HEK293T (cell line): ENCODE measurements at regions of chr15 and their contacts with region 1.

Region 1: GRCh38 chr15:75801859-75802593 is 41.2 kb upstream of the UBE2Q2 start:
- DNase-seq: peak; percentile 95

Region 2: DNA sequence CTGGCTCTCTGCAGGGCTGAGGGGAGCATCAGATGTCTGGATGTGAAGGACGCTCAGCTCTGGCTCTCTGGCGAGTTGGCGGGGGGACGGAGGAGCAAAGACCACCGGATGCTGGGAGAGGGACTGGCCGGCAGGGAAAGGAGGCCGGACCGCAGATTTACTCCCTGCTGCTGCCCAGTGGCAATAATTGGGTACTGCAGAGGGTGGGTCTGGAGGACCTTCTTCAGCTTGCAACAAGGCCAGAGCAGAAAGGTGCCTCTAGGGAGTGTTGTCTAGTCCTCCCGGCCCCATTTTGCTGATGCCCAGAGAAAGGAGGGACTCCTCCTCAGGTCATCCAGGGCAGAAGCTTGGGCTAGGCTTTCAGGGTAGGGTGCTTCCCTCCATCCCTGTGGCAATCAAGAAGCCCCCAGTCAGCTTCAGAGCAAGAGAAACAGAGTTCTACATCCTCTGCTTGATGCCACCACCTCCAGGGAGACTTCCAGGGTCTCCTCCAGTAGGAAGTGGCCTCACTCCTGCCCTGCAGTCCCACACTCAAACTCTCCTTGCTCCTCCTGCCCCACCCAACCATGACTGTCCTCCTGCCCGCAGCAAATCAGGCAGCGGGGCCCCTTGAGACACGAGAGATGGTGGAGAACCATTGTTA is 69.1 kb before region 1 on chr15:
- CTCF ChIA-PET with region 1: interaction called, 20 read pairs
- POLR2A ChIA-PET with region 1: interaction called, 3 read pairs
- DNase-seq: peak; percentile 70

Region 3: DNA sequence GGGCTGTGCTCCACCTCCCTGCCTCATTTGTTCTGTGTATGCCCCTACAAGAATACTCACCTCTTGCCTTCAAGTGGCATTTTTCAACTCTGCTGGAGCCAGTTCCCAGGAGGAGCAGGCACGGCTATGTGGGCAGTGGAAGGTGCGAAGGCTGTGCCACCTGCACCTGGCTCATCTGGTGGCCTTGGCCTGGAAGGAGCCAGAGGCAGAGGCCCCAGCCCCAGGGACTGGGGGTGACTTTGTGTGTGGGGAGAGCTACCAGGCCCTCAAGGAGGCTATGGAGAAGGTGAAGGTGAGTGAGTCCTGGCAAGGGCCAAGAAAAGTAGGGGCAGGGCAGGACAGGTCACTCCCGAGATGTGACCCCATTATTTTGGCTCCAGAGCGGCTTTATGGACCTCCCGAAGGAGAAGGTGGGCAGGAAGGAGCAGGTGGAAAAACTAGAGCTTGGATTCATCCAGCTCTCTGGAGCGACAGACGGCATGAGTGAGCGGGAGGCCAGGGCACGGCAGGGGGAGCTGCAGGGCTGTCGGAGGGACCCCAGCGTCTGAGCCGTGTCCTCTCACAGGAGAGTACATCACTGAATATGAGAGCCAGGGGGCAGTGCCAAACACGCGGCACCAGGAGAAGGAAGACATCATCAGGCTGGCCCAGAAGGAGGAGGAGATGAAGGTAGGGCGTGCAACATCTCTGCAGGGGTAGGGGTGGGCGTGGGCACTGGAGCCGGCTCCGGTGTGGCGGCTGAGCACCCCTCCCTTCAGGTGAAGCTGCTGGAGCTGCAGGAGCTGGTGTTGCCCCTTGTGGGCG is 16.1 kb before region 1 on chr15:
- CTCF ChIA-PET with region 1: no interaction called
- POLR2A ChIA-PET with region 1: no interaction called
- DNase-seq: no peak